ENCODE measurements at regions of chr2 and their contacts with region 1.

Region 1: GRCh38 chr2:203830304-203831055 is 37.1 kb upstream of the CTLA4 start:
- DNase-seq: peak; percentile 36
- H3K4me3 Mint-ChIP-seq: peak overlapping the region; percentile 57
- H3K27ac Mint-ChIP-seq: peak overlapping the region; percentile 95
- H3K4me1 Mint-ChIP-seq: peaks cover 26% of the 10 kb centered on the region
- H3K27me3 Mint-ChIP-seq: no peaks in the 10 kb centered on the region

Region 2: DNA sequence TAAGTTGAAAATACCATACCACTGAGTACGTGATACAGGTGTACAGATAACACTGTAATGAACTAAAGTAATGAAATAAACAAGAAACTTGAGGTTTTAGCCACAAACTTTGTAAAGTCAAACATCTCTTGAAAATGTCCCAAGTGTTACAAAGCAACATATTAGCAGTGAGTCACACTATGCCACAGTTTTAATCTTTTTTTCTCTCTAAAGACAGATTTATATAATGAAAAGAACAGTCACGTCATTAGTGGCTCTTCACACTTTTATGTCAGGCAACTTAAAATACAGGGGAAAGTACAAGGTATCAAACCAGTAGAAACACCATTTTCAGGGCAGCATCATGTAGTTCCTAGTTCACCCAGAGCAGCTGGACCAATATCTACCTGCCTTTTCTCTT is 337.5 kb before region 1 on chr2:
- intact Hi-C with region 1: no loop called
- DNase-seq: no peak
- H3K4me3 Mint-ChIP-seq: no peak overlapping the region
- H3K27ac Mint-ChIP-seq: no peak overlapping the region
- H3K4me1 Mint-ChIP-seq: peaks cover 17% of the 10 kb centered on the region
- H3K27me3 Mint-ChIP-seq: no peaks in the 10 kb centered on the region

Region 3: DNA sequence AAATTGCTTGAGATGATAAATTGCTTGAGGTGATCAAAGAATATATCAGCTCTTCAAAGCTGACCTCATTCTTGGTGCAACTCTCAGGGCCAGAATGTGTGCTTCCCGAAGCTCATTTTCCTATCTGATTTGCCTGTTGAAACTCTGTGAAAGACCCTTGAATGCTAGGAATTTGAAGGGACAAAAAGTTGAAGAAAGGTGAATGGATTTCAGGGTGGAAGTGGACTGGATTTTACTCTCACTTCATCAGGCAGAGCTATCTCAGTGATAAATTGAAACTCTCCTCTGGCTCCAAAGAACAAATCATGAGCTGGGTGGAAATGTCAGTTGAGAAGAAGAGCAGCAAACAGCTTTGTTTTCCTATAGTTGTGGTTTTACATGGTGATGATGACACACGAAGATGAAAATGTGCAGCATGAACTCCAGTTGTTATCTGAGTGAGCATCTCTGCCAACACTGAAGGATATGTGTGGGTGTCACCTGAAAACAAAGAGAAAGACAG is 89.6 kb before region 1 on chr2:
- intact Hi-C with region 1: loop called (anchors 1 kb)
- DNase-seq: peak; percentile 62
- H3K4me3 Mint-ChIP-seq: peak overlapping the region; percentile 62
- H3K27ac Mint-ChIP-seq: peak overlapping the region; percentile 99
- H3K4me1 Mint-ChIP-seq: peaks cover 81% of the 10 kb centered on the region
- H3K27me3 Mint-ChIP-seq: no peaks in the 10 kb centered on the region

Region 4: GRCh38 chr2:203840655-203841205 is 10.2 kb after region 1 on chr2:
- intact Hi-C with region 1: loop called (anchors 1 kb)
- DNase-seq: no peak
- H3K4me3 Mint-ChIP-seq: no peak overlapping the region
- H3K27ac Mint-ChIP-seq: no peak overlapping the region
- H3K4me1 Mint-ChIP-seq: peaks cover 34% of the 10 kb centered on the region
- H3K27me3 Mint-ChIP-seq: no peaks in the 10 kb centered on the region

Region 5: GRCh38 chr2:203871371-203871983 is 41.0 kb after region 1 on chr2:
- intact Hi-C with region 1: loop called (anchors 1 kb)
- DNase-seq: peak; percentile 60
- H3K4me3 Mint-ChIP-seq: peak overlapping the region; percentile 96
- H3K27ac Mint-ChIP-seq: peak overlapping the region; percentile 95
- H3K4me1 Mint-ChIP-seq: peaks cover 57% of the 10 kb centered on the region
- H3K27me3 Mint-ChIP-seq: no peaks in the 10 kb centered on the region

Region 6: DNA sequence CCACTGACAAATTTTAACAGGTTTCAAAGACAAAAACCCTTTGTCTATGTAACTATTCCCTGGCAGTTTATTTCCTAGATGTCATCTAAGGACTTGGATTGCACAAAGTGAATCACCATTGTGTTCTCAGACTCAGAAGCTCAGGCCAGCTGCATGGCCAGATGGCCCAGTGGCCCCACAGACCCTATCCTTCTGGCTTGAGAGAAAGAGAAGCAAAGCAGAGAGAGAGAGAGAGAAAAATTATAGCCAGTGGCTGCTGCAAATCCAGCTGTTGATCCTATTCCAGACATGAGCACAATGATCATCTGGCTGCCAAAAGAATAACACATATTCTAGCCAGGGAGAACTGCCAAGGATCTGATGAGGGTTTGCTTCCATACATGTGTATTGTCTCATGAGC is 62.9 kb after region 1 on chr2:
- intact Hi-C with region 1: loop called (anchors 1 kb)
- DNase-seq: no peak
- H3K4me3 Mint-ChIP-seq: no peak overlapping the region
- H3K27ac Mint-ChIP-seq: peak overlapping the region; percentile 92
- H3K4me1 Mint-ChIP-seq: peaks cover 79% of the 10 kb centered on the region
- H3K27me3 Mint-ChIP-seq: no peaks in the 10 kb centered on the region

Region 7: GRCh38 chr2:203934041-203934492 is 103.6 kb after region 1 on chr2:
- intact Hi-C with region 1: loop called (anchors 1 kb)
- DNase-seq: peak; percentile 59
- H3K4me3 Mint-ChIP-seq: peak overlapping the region; percentile 61
- H3K27ac Mint-ChIP-seq: peak overlapping the region; percentile 87
- H3K4me1 Mint-ChIP-seq: peaks cover 44% of the 10 kb centered on the region
- H3K27me3 Mint-ChIP-seq: no peaks in the 10 kb centered on the region

Measured in activated T-helper 2 cell treated with anti-CD3 and anti-CD28 coated beads, Interferon-gamma antibody, Interleukin-2, Interleukin-4, amounts not matched to agents 10 μg/mL and 5 μg/mL and 100 μg/mL, durations not matched to agents 14 hours and 24 hours and 36 hours (primary cell).